ENCODE measurements at regions of chr11 and their contacts with region 1.

Region 1: GRCh38 chr11:64036087-64037026 is 626 bp downstream of the FLRT1 start:
- DNase-seq: peak; percentile 79
- H3K4me3 ChIP-seq: peak overlapping the region; percentile 55 to 69 (median 64)
- H3K27ac ChIP-seq: peak overlapping the region; percentile 55 to 74 (median 72)
- H3K4me1 ChIP-seq: peaks cover 0 to 36% (median 20%) of the 10 kb centered on the region in 4 donors
- H3K27me3 ChIP-seq: peaks cover 0 to 9% (median 0%) of the 10 kb centered on the region in 3 donors
- CTCF ChIP-seq: no peak
- EP300 ChIP-seq: no peak
- POLR2A ChIP-seq: no peak

Region 2: DNA sequence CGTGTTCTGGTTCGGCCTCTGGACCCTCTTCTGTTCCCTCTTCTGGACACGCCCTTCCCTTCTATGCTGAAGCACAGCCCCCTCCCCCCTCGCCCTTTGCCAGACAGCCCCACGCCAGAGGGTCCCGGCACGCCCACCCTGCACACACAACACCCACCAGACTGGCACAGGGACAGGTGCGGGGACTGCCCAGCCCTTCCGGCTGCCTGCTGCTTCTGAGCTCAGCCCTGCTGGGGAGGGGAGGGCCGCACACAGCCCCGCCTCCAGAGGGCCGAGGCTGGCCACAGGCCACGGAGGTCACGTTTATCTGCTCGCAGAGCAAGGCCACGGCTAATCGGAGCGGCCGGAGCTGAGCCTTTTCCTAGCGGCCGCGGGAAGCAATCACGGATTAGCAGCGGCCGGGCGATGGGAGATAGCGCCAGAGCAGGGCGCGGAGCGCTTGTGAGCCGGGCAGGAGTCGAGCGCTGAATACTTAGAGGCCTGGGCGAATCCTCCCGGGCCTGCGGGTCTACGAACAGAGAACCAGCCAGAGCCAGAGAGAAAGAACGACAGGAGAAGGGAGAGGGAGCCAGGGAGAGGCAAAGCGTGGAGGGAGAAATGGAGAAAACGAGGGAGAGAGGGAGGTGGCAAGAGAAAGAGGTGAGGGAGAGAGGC is 28.6 kb before region 1 on chr11:
- intact Hi-C with region 1: loop called (anchors 2 kb)
- DNase-seq: peak; percentile 87
- H3K4me3 ChIP-seq: peak overlapping the region; percentile 27 to 48 (median 42)
- H3K27ac ChIP-seq: peak overlapping the region; percentile 48 to 63 (median 54)
- H3K4me1 ChIP-seq: peaks cover 0 to 17% (median 17%) of the 10 kb centered on the region in 4 donors
- H3K27me3 ChIP-seq: no peaks in the 10 kb centered on the region
- CTCF ChIP-seq: peak in 2 of 4 experiments; percentile 41
- EP300 ChIP-seq: no peak
- POLR2A ChIP-seq: no peak

Region 3: DNA sequence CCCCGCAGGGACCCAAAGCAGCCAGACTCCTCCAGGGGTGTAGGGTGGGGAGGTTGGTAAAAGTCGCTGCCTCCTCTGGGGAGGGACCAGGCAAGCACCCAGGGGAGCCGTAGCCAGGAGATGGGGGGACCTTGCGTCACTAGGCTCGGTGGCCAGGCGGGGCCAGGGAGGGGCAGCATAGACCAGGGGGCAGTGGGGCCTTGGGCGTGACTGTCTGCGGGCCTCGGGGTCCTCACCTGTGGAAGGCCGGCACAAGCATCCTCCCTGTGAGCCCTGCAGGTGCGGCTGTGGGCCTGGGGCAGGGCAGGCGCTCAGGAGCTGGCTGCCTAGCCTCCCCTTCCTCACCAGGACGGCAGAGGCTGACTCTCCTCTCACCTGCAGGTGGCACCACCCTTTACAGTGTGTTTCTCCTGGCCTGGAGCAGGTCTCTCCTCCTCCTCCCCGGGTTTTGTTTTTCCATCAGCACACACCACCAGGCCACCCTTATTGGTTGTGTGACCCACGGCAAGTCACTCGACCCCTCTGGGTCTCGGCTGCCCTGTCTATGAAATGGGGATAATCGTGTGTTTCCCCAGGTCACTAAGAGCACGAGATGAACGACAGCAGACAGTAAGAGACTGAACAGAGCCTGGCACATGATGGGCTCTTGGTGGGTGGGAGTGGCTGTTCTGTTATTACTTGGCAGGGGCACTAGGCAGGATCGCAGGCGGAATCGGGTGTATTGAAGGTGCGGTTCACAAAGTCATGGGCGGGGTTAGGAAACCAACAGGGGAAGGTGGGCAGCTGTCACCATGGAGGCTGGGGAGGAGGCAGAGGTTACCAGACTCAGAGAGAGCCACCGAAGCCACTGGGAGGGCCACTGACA is 52.0 kb after region 1 on chr11:
- intact Hi-C with region 1: loop called (anchors 2 kb)
- DNase-seq: no peak
- H3K4me3 ChIP-seq: no peak overlapping the region
- H3K27ac ChIP-seq: peak overlapping the region in 2 of 4 donors; percentile 24 to 34
- H3K4me1 ChIP-seq: peaks cover 0 to 59% (median 28%) of the 10 kb centered on the region in 4 donors
- H3K27me3 ChIP-seq: no peaks in the 10 kb centered on the region
- CTCF ChIP-seq: peak in 1 of 4 experiments; percentile 14
- EP300 ChIP-seq: no peak
- POLR2A ChIP-seq: no peak